ENCODE measurements at regions of chr5 and their contacts with region 1.

Region 1: DNA sequence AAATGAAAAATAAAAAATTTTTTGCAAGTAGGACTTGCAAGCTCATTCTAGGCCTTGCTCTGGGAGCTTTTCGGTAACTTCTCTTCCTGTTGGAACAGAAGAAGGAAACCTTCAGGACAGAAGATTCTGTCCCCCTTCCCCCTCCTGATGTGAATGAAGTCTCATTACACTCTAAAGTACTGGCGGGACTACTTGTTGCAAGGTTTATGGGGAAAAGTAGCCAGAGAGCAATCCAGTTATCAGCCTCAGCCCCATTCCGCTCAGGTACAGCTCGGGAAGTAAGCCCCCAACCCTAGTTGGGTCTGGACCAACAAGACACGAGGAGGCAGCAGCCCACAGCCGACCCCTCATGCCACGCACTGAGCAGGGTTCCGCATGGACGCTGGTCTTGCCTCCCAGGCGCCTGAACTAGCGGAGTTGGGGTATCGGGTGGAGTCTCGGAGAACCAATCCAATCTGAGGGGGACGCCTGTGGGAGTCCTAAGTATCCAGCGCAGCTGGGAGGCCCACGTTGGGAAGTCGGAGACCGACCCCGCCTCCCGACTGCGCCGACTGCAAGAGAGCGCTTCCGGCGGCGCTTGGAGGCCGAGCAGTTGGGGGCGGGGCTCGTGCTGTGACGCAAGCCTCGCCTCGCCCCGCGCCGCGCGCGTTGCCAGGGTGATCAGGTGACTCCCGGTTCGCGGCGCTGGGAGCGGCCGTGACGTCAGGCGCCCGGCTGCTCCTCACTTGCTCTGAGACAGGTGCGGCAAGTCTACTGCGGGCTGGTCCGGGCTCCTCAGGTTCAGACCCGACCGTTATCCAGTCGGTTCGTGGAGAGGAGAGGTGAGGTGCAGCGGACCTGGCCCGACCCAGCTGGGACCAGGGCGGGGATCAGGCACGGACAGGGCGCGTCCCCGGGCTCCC is at the start of gene CYSTM1:
- DNase-seq: peak; percentile 96
- ATAC-seq: peak; percentile 94 to 97 (median 95)
- H3K4me3 ChIP-seq: peak within 1 kb of the TSS; percentile 56 to 98 (median 88)
- H3K27ac ChIP-seq: peak within 1 kb of the TSS; percentile 81 to 99 (median 97)
- H3K4me1 ChIP-seq: peaks cover 0 to 44% (median 40%) of the 10 kb centered on the region in 9 donors
- H3K27me3 ChIP-seq: no peaks in the 10 kb centered on the region
- CTCF ChIP-seq: peak in 1 of 9 donors; percentile 6
- total RNA-seq, gene CYSTM1: 55.2 to 114 (median 95.3) TPM

Region 2: GRCh38 chr5:139808493-139809139 is 366.1 kb before region 1 on chr5:
- intact Hi-C with region 1: no loop called
- DNase-seq: peak; percentile 16 to 41
- ATAC-seq: peak in 4 of 8 donors; percentile 65 to 80 (median 70)
- H3K4me3 ChIP-seq: no peak overlapping the region
- H3K27ac ChIP-seq: no peak overlapping the region
- H3K4me1 ChIP-seq: no peaks in the 10 kb centered on the region
- H3K27me3 ChIP-seq: peaks cover 0 to 15% (median under 1%) of the 10 kb centered on the region in 7 donors
- CTCF ChIP-seq: peak in 1 of 9 donors; percentile 7

Region 3: DNA sequence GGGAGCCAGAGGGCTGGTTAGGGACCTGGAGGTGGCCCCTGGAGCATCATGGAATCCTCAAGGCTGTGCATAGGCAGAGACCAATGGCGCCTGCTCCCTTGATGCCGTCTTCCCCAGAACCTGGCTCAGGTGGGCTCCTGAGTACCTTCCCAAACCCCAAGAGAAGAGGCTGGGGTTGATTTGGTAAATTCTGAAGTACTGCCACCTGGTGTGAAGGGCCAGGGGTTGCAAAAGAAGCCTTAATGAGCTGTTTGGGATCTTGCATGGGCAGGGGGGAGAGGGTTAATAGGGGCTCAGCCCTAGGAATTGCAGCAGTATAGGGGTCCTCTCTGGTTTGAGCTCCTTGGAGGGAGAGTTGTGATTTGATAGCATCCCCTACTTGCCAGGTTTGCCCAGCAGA is 52.3 kb after region 1 on chr5:
- intact Hi-C with region 1: loop called in 2 of 10 experiments (anchors 5 to 10 kb)
- DNase-seq: no peak
- ATAC-seq: no peak
- H3K4me3 ChIP-seq: no peak overlapping the region
- H3K27ac ChIP-seq: no peak overlapping the region
- H3K4me1 ChIP-seq: peaks cover 16 to 59% (median 32%) of the 10 kb centered on the region in 9 donors
- H3K27me3 ChIP-seq: no peaks in the 10 kb centered on the region
- CTCF ChIP-seq: no peak

Region 4: DNA sequence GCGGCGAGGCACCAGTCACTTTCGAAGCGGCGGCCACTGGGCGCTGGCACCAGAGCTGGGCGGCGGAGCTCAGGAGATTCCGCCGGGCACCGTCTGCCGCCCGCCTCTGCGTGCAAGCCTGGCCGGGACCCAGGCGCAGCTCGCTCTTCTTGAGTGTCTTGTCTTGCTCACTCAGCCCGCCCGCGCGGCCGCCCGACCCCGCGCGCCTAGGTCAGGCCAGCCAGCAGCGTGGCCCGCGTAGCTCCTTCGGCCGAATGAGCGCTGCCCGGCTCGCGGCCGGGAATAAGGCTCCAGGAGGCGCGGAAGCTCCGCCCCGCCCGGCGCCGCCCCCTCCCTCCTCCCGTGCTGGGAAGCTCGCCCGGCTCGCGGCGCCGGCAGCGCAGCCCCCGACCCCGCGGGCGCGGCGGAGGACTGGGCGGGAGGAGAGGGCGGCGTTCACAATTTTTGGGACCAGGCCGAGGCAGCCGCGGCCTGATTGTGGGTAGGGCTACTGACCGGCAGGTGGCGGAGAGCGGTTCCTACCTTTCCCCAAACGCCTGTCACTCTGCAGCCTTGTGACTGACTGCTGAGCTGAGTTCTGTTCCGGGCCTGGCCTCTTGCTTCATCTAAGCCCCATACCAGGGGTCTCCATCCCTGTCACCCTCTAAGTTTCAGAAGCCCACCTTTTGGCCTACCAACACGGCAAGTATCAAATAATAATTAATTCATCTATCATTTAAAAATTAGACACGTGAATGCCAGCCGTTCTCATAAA is 171.8 kb after region 1 on chr5 and contains the start of gene HBEGF:
- intact Hi-C with region 1: loop called in 8 of 10 experiments (anchors 2 to 5 kb)
- DNase-seq: peak; percentile 84 to 88
- ATAC-seq: peak; percentile 70 to 91 (median 84)
- H3K4me3 ChIP-seq: peak within 1 kb of the TSS; percentile 78 to 97 (median 88)
- H3K27ac ChIP-seq: peak within 1 kb of the TSS; percentile 74 to 97 (median 95)
- H3K4me1 ChIP-seq: peaks cover 19 to 68% (median 60%) of the 10 kb centered on the region in 9 donors
- H3K27me3 ChIP-seq: no peaks in the 10 kb centered on the region
- CTCF ChIP-seq: peak; percentile 17 to 68 (median 47)
- total RNA-seq, gene HBEGF: 18.5 to 121 (median 33.3) TPM

Region 5: GRCh38 chr5:140351609-140352334 is 177.1 kb after region 1 on chr5:
- intact Hi-C with region 1: loop called in 9 of 10 experiments (anchors 2 to 5 kb)
- DNase-seq: peak in 1 of 2 donors; percentile 85
- ATAC-seq: peak in 7 of 8 donors; percentile 32 to 70 (median 51)
- H3K4me3 ChIP-seq: no peak overlapping the region
- H3K27ac ChIP-seq: no peak overlapping the region
- H3K4me1 ChIP-seq: peaks cover 11 to 25% (median 18%) of the 10 kb centered on the region in 9 donors
- H3K27me3 ChIP-seq: no peaks in the 10 kb centered on the region
- CTCF ChIP-seq: peak; percentile 84 to 93 (median 90)

Region 6: DNA sequence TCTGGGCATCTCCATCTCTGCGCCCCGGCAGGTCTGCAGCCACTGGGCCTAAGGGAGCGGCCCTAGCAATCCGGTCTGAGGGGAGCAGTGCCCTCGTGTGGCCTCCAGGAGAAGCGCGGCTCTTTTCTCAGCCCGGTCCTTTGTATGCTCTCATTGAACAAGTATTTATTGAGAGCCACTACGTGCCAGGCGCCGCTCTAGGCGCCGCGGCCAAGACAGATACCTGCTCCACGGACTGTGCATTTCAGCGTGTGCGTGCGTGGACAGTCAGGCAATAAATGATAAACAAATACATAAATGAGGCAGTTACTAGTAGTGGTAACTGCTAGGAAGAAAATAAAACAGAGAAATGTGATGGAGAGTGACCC is 183.0 kb after region 1 on chr5:
- intact Hi-C with region 1: loop called in 5 of 10 experiments (anchors 5 to 10 kb)
- DNase-seq: peak; percentile 78
- ATAC-seq: peak; percentile 86 to 94 (median 92)
- H3K4me3 ChIP-seq: peak overlapping the region in 5 of 10 donors; percentile 7 to 41 (median 31)
- H3K27ac ChIP-seq: no peak overlapping the region
- H3K4me1 ChIP-seq: peaks cover 0 to 16% (median 10%) of the 10 kb centered on the region in 9 donors
- H3K27me3 ChIP-seq: no peaks in the 10 kb centered on the region
- CTCF ChIP-seq: peak; percentile 81 to 96 (median 91)

Region 7: DNA sequence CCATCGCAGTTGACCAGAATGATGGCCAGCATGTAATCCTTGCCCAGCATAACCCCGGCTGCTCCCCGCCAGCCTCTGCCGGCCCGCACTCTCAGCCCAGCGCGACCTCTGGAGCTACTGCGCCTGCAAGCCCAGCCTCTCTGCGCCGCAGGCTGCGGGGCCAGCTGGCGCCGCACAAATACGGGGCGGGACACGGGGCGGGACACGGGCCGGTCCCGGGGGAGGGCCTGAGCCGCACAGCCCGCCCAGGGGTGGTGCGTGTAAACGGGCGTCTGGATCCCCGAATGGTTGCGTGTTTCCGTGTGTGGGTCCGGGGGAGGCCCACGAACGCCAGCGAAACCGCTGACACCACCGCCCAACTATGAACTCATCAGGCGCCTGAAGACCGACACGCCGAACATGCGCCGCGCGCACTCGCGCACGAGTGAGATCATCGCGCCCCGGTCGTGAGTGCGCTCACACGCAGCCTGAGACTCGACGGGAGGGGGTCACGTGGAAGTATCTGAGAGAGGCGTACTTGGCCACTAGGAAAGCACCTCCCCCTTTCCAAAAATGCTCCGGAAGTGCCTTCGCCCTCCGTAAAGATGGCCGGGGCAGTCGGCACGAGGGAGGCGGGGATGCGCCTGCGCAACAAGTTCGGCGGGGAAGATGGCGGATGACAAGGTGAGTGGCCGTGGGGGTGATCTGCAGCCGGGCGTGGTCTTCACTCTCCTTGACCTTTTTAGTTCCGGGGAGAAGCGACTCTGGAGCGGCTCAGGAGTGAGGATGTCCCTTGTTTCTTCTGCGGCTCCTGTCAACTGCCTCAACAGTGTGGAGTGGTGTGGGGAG is 389.7 kb after region 1 on chr5 and contains the starts of genes APBB3 and SLC35A4:
- intact Hi-C with region 1: no loop called
- DNase-seq: peak; percentile 92 to 98
- ATAC-seq: peak; percentile 93 to 96 (median 94)
- H3K4me3 ChIP-seq: peak within 1 kb of the TSS; percentile 57 to 86 (median 70)
- H3K27ac ChIP-seq: peak within 1 kb of the TSS; percentile 88 to 98 (median 94)
- H3K4me1 ChIP-seq: peaks cover 7 to 67% (median 56%) of the 10 kb centered on the region in 9 donors
- H3K27me3 ChIP-seq: no peaks in the 10 kb centered on the region
- CTCF ChIP-seq: no peak
- total RNA-seq, gene APBB3: 8.0 to 18.7 (median 13.3) TPM
- total RNA-seq, gene SLC35A4: 69.7 to 105 (median 80.6) TPM